Activated naive CD4-positive, alpha-beta T cell treated with anti-CD3 and anti-CD28 coated beads, Interleukin-2, amount 10 ng/mL, durations not matched to agents 7 days and 5 days (primary cell): ENCODE measurements at regions of chr1 and their contacts with region 1.

Region 1: DNA sequence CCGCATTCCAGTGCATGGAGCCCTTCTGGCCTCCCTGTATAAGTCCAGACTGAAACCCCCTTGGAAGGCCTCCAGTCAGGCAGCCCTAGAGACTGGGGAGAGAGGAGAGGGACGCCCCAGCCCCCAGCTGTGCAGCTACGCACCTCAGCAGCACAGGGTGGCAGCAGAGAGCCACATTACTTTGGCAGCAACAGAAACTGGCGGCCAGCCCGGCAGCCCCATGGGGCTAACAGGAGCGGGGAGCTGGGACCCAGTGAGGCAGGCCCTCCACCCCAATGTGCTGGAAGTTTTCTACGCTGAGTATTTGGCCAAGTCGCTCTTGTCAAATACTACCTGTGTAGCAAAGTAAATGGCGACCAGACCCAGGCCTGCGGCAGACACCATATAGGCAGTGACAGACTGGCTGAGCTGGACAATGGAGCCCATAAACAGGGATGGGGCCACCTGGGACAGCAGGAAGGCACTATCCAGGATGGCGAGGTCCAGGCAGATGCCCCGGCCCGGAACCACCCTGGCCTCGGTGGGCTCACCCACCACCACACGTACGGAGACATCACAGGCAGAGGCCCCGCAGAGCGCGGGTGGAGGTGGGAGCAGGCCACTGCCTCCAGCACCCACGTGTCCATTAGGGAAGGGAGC is 21.2 kb downstream of the SLC45A3 start:
- DNase-seq: peak; percentile 86
- H3K4me3 Mint-ChIP-seq: no peak overlapping the region
- H3K27ac Mint-ChIP-seq: no peak overlapping the region
- H3K4me1 Mint-ChIP-seq: no peaks in the 10 kb centered on the region
- H3K27me3 Mint-ChIP-seq: peaks cover 39% of the 10 kb centered on the region

Region 2: DNA sequence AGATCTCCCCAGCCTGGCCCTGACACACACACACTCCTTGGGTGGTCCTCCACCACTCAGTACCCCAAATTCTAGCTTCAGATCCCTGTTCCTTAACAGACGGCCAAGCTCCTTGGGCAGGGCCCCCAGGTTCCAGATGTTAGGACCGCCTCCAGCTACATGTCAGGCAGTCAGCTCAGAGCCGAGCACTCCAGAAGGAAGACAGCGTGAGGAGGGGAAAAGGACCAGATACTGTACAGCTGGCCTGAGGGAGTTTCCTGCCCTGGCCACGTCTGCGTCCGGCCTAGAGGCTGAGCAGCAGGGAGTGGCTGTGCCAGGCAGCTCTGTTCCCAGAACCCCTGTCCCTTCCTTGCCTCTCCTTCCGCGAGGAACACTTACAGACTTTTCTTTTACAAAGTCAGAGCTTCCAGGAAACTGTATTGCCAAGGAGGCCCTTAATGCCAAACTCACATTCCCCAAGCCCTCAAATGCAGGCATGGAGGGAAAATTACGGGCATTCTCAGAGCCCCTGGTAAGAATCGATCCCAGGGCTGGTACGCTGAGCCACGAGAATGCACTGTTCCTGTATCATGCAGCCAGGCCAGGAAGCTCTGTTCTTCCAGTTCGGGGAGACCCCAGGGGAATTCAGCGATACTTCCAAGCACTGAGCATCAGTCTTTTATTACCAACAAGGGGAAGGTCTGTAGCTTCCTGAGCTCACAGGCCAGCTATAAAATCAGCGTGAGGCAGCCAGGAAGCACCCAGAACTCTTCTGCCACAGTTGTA is 661.3 kb before region 1 on chr1:
- CTCF ChIA-PET with region 1: no interaction called
- DNase-seq: no peak
- H3K4me3 Mint-ChIP-seq: no peak overlapping the region
- H3K27ac Mint-ChIP-seq: no peak overlapping the region
- H3K4me1 Mint-ChIP-seq: peaks cover 4% of the 10 kb centered on the region
- H3K27me3 Mint-ChIP-seq: peaks cover 20% of the 10 kb centered on the region

Region 3: GRCh38 chr1:205458777-205459566 is 200.1 kb before region 1 on chr1:
- CTCF ChIA-PET with region 1: no interaction called
- DNase-seq: peak; percentile 74
- H3K4me3 Mint-ChIP-seq: no peak overlapping the region
- H3K27ac Mint-ChIP-seq: no peak overlapping the region
- H3K4me1 Mint-ChIP-seq: peaks cover 13% of the 10 kb centered on the region
- H3K27me3 Mint-ChIP-seq: peaks cover 70% of the 10 kb centered on the region

Region 4: DNA sequence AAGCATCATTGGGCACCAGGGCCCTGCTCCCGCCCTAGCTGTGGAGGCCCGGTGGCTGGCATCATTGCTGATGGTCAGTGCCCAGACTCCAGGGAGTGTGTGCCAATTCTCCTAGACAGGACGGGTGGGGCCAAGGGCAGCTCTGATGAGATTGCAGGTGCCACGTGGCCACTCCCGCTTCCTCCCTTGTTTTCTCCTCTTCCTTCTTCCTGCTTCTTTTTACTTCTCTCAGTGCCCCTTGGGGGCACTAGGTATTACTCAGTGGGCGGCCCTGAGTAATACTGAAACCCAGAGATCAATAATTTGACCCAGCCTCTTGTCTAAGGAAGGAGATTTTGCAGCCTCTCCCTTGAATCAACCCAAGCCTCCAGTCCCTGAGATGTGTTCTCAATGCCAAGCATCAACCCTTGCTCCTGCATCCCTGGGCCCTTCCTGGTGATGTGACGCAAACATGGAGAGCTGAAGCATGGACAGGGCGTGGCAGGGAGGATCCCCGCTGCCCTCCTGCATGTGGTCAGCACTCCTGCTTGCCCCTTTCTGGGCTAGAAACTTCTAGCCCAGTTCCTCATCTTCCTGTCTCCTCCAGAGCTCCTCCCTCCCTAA is 122.2 kb before region 1 on chr1:
- CTCF ChIA-PET with region 1: interaction called, 238 read pairs
- DNase-seq: peak; percentile 18
- H3K4me3 Mint-ChIP-seq: no peak overlapping the region
- H3K27ac Mint-ChIP-seq: no peak overlapping the region
- H3K4me1 Mint-ChIP-seq: peaks cover 11% of the 10 kb centered on the region
- H3K27me3 Mint-ChIP-seq: peaks cover 44% of the 10 kb centered on the region

Region 5: GRCh38 chr1:205591522-205592351 is 67.3 kb before region 1 on chr1:
- CTCF ChIA-PET with region 1: interaction called, 337 read pairs
- DNase-seq: peak; percentile 93
- H3K4me3 Mint-ChIP-seq: peak overlapping the region; percentile 84
- H3K27ac Mint-ChIP-seq: peak overlapping the region; percentile 89
- H3K4me1 Mint-ChIP-seq: peaks cover 56% of the 10 kb centered on the region
- H3K27me3 Mint-ChIP-seq: peaks cover 9% of the 10 kb centered on the region

Region 6: DNA sequence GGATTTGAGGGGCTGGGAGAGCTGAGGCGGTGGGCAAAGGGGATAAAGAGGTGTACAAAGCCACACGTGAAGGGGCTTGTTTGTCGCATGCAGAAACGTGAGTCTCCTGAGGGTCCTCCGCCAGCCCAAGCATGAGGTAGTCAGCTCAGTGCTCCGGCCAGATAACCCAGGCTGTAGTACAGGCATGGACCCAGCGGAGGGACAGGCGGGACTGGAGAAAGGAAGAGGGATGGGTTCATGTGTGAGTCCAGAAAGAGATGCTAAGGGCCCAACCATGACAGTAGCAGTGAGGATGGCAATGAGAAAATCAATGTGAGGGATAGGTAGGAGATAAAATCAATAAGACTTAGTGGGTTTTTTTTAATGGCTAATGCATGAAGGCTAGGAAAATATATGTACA is 13.5 kb before region 1 on chr1:
- CTCF ChIA-PET with region 1: interaction called, 32 read pairs
- DNase-seq: no peak
- H3K4me3 Mint-ChIP-seq: no peak overlapping the region
- H3K27ac Mint-ChIP-seq: no peak overlapping the region
- H3K4me1 Mint-ChIP-seq: no peaks in the 10 kb centered on the region
- H3K27me3 Mint-ChIP-seq: peaks cover 18% of the 10 kb centered on the region

Region 7: GRCh38 chr1:205711104-205712020 is 52.3 kb after region 1 on chr1:
- CTCF ChIA-PET with region 1: interaction called, 205 read pairs
- DNase-seq: peak; percentile 73
- H3K4me3 Mint-ChIP-seq: no peak overlapping the region
- H3K27ac Mint-ChIP-seq: peak overlapping the region; percentile 74
- H3K4me1 Mint-ChIP-seq: peaks cover 11% of the 10 kb centered on the region
- H3K27me3 Mint-ChIP-seq: no peaks in the 10 kb centered on the region

Region 8: DNA sequence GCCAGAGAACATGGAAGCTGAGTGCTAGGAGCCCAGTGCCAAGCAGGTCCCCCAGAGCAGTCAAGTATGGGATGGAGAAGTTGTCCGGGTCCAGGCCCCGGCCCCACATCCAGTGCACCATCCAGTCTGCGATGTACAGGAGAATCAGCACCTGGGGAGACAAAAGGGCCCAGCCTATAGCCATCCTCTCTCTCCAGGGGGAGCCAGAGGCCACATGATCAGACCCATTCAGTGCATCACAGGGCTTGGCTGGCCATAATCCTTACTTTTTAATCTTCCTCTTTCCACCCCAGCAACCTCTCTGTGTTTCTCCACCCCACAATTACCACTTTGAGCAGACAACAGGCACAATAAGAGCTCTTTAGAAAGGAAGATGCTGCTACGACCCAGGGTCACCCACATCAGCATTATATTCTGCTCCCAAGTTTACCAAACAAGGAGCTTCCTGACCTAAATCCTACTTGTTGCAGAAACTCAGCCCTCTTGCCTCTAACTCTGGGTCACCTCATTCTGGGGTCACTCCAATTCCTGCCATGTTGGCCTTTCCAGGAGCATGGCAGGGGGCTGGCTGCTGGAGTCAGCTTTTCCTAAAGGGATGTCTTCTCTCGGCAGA is 132.6 kb after region 1 on chr1:
- CTCF ChIA-PET with region 1: interaction called, 145 read pairs
- DNase-seq: peak; percentile 76
- H3K4me3 Mint-ChIP-seq: no peak overlapping the region
- H3K27ac Mint-ChIP-seq: no peak overlapping the region
- H3K4me1 Mint-ChIP-seq: no peaks in the 10 kb centered on the region
- H3K27me3 Mint-ChIP-seq: no peaks in the 10 kb centered on the region

Region 9: DNA sequence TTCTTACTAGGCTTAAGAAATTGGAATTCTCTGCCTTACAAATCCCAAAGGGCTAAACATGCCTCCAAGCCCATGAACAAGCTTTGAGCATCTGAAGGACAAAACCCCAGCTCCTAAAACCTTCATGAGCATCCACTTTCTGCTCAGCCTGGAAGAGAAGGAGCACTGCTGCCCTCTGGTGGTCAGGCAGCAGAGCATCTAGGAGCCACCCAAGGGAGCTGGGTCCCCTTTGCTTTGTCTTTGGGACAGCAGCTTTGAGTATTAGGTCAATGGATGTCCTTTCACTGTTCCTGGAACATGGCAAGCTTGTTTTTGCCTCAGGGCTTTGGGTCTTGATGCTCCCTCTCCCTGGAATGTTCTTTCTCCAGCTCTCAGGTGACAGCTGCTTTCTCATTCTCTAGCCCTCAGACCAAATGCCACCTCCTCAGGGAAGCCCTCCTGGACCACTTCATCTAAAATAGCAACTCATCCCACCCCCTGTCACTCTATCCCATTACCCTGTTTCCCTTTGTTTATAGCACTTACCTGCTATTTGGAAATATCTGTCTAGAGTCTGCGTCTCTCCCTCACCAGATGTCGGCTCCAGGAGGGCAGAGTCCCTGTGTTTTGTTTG is 318.4 kb after region 1 on chr1:
- CTCF ChIA-PET with region 1: interaction called, 94 read pairs
- DNase-seq: peak; percentile 85
- H3K4me3 Mint-ChIP-seq: no peak overlapping the region
- H3K27ac Mint-ChIP-seq: no peak overlapping the region
- H3K4me1 Mint-ChIP-seq: no peaks in the 10 kb centered on the region
- H3K27me3 Mint-ChIP-seq: no peaks in the 10 kb centered on the region